ENCODE measurements at regions of chr10 and their contacts with region 1.

Region 1: GRCh38 chr10:114304017-114304570 is 65.0 kb downstream of the VWA2 start:
- DNase-seq: peak; percentile 87
- H3K4me3 ChIP-seq: peak overlapping the region; percentile 35
- H3K27ac ChIP-seq: no peak overlapping the region
- H3K4me1 ChIP-seq: peaks cover 7% of the 10 kb centered on the region
- H3K27me3 ChIP-seq: no peaks in the 10 kb centered on the region
- CTCF ChIP-seq: peak; percentile 86

Region 2: DNA sequence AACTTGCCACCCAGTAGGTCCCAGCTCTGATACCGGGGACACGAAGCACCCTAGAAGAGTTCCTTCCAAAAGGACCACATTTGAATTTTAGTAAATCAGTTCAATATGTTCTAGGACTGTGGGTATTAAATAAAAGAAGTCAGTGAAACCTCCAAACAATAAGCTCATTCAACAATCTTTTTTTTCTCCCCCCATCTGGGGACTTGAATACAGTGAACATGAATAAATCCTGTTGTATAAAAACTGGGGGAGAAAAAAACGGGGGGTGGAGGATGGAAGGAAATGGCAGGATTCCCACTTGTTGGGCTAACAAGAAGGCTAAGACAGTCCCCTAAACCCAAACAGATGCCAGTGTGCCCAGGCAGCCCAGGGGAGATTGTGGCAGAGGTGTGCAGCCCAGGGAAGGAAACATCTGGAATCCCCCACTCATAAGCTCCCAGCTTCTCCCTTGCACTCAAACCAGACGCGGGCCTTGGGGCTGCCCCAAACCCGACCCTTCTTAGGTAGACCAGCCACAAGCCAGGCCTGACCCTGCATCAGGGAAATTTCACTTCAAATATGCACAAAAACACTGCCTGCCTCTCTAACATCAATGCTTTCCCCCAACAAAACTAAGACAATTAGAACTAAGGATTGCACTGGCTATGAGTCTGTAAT is 91.4 kb after region 1 on chr10:
- CTCF ChIA-PET with region 1: no interaction called
- POLR2A ChIA-PET with region 1: interaction called, 12 read pairs
- intact Hi-C with region 1: no loop called
- DNase-seq: no peak
- H3K4me3 ChIP-seq: no peak overlapping the region
- H3K27ac ChIP-seq: no peak overlapping the region
- H3K4me1 ChIP-seq: peaks cover 11% of the 10 kb centered on the region
- H3K27me3 ChIP-seq: peaks cover 76% of the 10 kb centered on the region
- CTCF ChIP-seq: no peak

Region 3: GRCh38 chr10:114458955-114459354 is 154.9 kb after region 1 on chr10:
- CTCF ChIA-PET with region 1: interaction called, 10 read pairs
- POLR2A ChIA-PET with region 1: no interaction called
- intact Hi-C with region 1: no loop called
- DNase-seq: peak; percentile 38
- H3K4me3 ChIP-seq: no peak overlapping the region
- H3K27ac ChIP-seq: no peak overlapping the region
- H3K4me1 ChIP-seq: no peaks in the 10 kb centered on the region
- H3K27me3 ChIP-seq: no peaks in the 10 kb centered on the region
- CTCF ChIP-seq: peak; percentile 59

Region 4: GRCh38 chr10:114703377-114704107 is 399.4 kb after region 1 on chr10:
- CTCF ChIA-PET with region 1: interaction called, 3 read pairs
- POLR2A ChIA-PET with region 1: no interaction called
- intact Hi-C with region 1: loop called (anchors 1 kb)
- DNase-seq: peak; percentile 60
- H3K4me3 ChIP-seq: no peak overlapping the region
- H3K27ac ChIP-seq: no peak overlapping the region
- H3K4me1 ChIP-seq: peaks cover 4% of the 10 kb centered on the region
- H3K27me3 ChIP-seq: no peaks in the 10 kb centered on the region
- CTCF ChIP-seq: peak; percentile 73

Region 5: DNA sequence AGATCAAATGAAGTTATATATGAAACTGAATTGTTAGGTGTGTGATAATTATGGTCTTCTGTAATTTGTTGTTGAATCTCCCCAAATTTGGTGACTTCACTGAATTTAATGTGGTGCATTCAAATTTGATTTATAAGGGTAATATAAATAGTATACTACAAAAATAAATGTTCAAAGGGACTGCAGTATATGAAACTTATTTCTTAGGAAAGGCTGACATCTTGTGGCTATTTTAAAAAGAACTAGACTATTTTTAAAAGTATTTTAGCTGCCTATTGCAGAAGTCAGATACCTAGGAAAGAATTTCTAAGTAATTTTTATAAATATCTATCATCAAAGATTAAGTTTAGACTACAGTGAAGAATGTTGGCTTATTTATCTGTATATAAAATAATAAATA is 825.7 kb after region 1 on chr10:
- CTCF ChIA-PET with region 1: interaction called, 7 read pairs
- POLR2A ChIA-PET with region 1: no interaction called
- intact Hi-C with region 1: loop called (anchors 1 kb)
- DNase-seq: peak; percentile 43
- H3K4me3 ChIP-seq: no peak overlapping the region
- H3K27ac ChIP-seq: no peak overlapping the region
- H3K4me1 ChIP-seq: no peaks in the 10 kb centered on the region
- H3K27me3 ChIP-seq: no peaks in the 10 kb centered on the region
- CTCF ChIP-seq: peak; percentile 60; the same call in 1 of the 2 replicates